ENCODE measurements at regions of chr9 and their contacts with region 1.

Region 1: GRCh38 chr9:69822091-69822750 is 1.6 kb downstream of the CFAP95 start:
- DNase-seq: no peak
- H3K4me3 Mint-ChIP-seq: no peak overlapping the region
- H3K27ac Mint-ChIP-seq: peak overlapping the region; percentile 30
- H3K4me1 Mint-ChIP-seq: peaks cover 61% of the 10 kb centered on the region
- H3K27me3 Mint-ChIP-seq: no peaks in the 10 kb centered on the region

Region 2: GRCh38 chr9:69672596-69673310 is 149.5 kb before region 1 on chr9:
- intact Hi-C with region 1: loop called (anchors 5 kb)
- DNase-seq: peak; percentile 68
- H3K4me3 Mint-ChIP-seq: peak overlapping the region; percentile 83
- H3K27ac Mint-ChIP-seq: no peak overlapping the region
- H3K4me1 Mint-ChIP-seq: peaks cover 21% of the 10 kb centered on the region
- H3K27me3 Mint-ChIP-seq: peaks cover 40% of the 10 kb centered on the region

Region 3: DNA sequence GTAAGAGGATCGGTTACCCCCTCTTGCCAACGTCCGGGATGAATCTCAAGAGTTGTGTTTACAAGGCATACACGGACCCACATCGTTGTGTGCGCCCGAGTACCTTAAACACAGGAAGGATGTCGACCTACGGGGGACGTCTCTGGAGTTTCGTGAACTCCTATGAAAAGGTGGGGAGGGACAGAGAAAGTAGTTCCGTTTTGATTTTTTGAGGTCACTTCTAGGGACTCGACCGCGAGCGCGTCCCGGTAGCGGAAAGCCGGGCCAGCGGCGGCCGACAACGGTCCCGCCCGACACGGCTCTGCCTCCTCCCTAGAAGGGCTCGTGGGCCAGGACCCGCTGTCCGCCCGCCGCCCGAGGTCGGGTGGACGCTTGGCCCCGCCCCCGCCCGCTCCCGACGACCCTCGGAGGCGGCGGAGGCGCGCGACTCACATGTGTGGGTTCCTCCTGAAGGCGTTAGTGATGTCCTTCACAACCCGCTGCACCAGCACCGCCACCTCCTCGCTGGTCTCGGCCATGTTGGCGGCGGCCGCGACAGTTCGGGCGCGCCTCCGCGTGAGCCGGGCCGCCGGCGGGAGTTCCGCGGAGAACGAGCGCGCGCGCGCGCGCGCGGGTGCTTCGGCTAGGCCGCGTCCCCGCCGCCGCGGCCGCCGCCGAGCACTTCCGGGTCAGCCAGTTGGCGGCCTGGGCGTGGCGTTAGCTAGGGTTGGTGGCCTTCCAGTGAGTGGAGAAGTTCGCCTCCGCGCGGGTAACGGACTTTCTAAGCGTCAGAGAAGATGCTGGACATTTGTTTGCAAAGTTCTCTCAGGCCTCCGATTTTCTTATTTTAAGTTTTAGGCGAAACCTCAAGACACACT is 62.6 kb before region 1 on chr9 and contains the start of gene PTAR1:
- intact Hi-C with region 1: loop called (anchors 2 kb)
- DNase-seq: peak; percentile 87
- H3K4me3 Mint-ChIP-seq: peak within 1 kb of the TSS; percentile 97
- H3K27ac Mint-ChIP-seq: peak within 1 kb of the TSS; percentile 94
- H3K4me1 Mint-ChIP-seq: peaks cover 25% of the 10 kb centered on the region
- H3K27me3 Mint-ChIP-seq: no peaks in the 10 kb centered on the region
- total RNA-seq, gene PTAR1: 51.1 and 57.2 TPM in 2 replicates

Region 4: GRCh38 chr9:69834591-69835184 is 12.5 kb after region 1 on chr9:
- intact Hi-C with region 1: loop called (anchors 1 kb)
- DNase-seq: no peak
- H3K4me3 Mint-ChIP-seq: peak overlapping the region; percentile 33
- H3K27ac Mint-ChIP-seq: peak overlapping the region; percentile 78
- H3K4me1 Mint-ChIP-seq: peaks cover 50% of the 10 kb centered on the region
- H3K27me3 Mint-ChIP-seq: no peaks in the 10 kb centered on the region

Region 5: GRCh38 chr9:69847491-69847890 is 25.3 kb after region 1 on chr9:
- intact Hi-C with region 1: no loop called
- DNase-seq: no peak
- H3K4me3 Mint-ChIP-seq: no peak overlapping the region
- H3K27ac Mint-ChIP-seq: no peak overlapping the region
- H3K4me1 Mint-ChIP-seq: peaks cover 6% of the 10 kb centered on the region
- H3K27me3 Mint-ChIP-seq: peaks cover 45% of the 10 kb centered on the region

Measured in activated T-helper 2 cell treated with anti-CD3 and anti-CD28 coated beads, Interferon-gamma antibody, Interleukin-2, Interleukin-4, amounts not matched to agents 10 μg/mL and 5 μg/mL and 100 μg/mL, durations not matched to agents 14 hours and 24 hours and 36 hours (primary cell).